ENCODE measurements at regions of chr6 and their contacts with region 1.

Region 1: GRCh38 chr6:150079604-150080003 is 10.7 kb upstream of the ULBP3 start:
- DNase-seq: peak in 1 of 2 donors; percentile 65
- ATAC-seq: peak in 2 of 3 donors; percentile 12 to 31
- H3K4me3 ChIP-seq: no peak overlapping the region
- H3K4me3 Mint-ChIP-seq: no peak overlapping the region
- H3K27ac ChIP-seq: no peak overlapping the region
- H3K27ac Mint-ChIP-seq: no peak overlapping the region
- H3K4me1 ChIP-seq: peaks cover 3% of the 10 kb centered on the region
- H3K4me1 Mint-ChIP-seq: peaks cover 6 to 13% of the 10 kb centered on the region in 2 donors
- H3K27me3 ChIP-seq: no peaks in the 10 kb centered on the region
- H3K27me3 Mint-ChIP-seq: peaks cover 19 to 43% of the 10 kb centered on the region in 2 donors
- CTCF ChIP-seq: no peak

Region 2: GRCh38 chr6:149716181-149716973 is 363.2 kb before region 1 on chr6:
- intact Hi-C with region 1: no loop called
- DNase-seq: peak in 1 of 2 donors; percentile 25
- ATAC-seq: no peak
- H3K4me3 ChIP-seq: peak overlapping the region; percentile 81
- H3K4me3 Mint-ChIP-seq: peak overlapping the region; percentile 96
- H3K27ac ChIP-seq: peak overlapping the region; percentile 47
- H3K27ac Mint-ChIP-seq: peak overlapping the region; percentile 94 to 97
- H3K4me1 ChIP-seq: peaks cover 11% of the 10 kb centered on the region
- H3K4me1 Mint-ChIP-seq: peaks cover 31 to 35% of the 10 kb centered on the region in 2 donors
- H3K27me3 ChIP-seq: no peaks in the 10 kb centered on the region
- H3K27me3 Mint-ChIP-seq: no peaks in the 10 kb centered on the region
- CTCF ChIP-seq: no peak

Region 3: GRCh38 chr6:150100745-150101144 is 21.1 kb after region 1 on chr6:
- intact Hi-C with region 1: no loop called
- DNase-seq: no peak
- ATAC-seq: no peak
- H3K4me3 ChIP-seq: no peak overlapping the region
- H3K4me3 Mint-ChIP-seq: no peak overlapping the region
- H3K27ac ChIP-seq: no peak overlapping the region
- H3K27ac Mint-ChIP-seq: no peak overlapping the region
- H3K4me1 ChIP-seq: no peaks in the 10 kb centered on the region
- H3K4me1 Mint-ChIP-seq: no peaks in the 10 kb centered on the region
- H3K27me3 ChIP-seq: no peaks in the 10 kb centered on the region
- H3K27me3 Mint-ChIP-seq: peaks cover 3 to 18% of the 10 kb centered on the region in 2 donors
- CTCF ChIP-seq: no peak

Region 4: DNA sequence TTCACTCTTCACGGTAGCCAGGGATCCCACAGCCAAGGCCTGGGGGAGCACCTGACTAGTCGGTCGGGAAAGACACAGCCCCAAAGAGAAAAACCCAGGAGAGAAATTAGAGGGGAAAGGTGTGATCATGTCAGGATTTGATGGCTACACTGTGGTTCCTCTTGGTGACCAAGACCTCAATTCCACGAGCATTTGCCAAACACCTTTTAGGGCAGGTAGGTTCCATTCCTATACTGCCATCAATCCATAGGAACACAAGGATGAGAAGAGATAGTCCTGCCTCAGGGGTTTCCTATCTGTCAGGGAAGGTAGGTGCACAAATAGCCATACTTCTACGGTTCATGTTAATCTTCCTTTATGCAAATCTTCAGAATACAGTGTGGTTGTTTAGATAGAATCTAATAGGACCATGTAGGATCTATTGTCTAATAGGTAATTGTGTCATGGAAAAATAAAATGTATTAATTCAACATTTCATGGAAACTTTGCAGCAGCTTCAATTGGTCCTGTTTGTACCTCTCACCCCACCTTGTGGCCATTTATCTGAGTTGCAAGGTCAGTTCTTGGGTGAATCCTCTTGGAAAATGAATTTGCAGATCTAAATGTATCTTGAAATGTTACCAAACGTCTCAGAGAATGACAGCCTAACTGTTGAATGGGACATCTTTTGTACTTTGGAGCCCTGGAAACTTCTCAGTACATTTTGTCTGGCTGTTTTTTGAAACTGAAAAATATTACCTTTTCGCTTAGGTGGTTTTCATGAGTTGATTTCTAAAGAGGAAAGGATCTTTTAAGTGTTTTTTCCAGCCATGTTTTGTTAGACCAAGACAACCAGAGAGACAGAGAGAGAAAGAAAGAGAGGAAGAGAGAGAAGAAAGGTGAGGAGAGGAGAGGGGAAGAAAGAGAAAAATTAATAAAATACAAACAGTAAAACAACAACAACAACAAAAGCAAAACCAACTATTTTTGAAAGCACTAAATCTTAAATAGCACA is 255.5 kb after region 1 on chr6:
- intact Hi-C with region 1: loop called (anchors 1 kb)
- DNase-seq: peak in 1 of 2 donors; percentile 68
- ATAC-seq: peak in 1 of 3 donors; percentile 36
- H3K4me3 ChIP-seq: no peak overlapping the region
- H3K4me3 Mint-ChIP-seq: no peak overlapping the region
- H3K27ac ChIP-seq: no peak overlapping the region
- H3K27ac Mint-ChIP-seq: no peak overlapping the region
- H3K4me1 ChIP-seq: no peaks in the 10 kb centered on the region
- H3K4me1 Mint-ChIP-seq: no peaks in the 10 kb centered on the region
- H3K27me3 ChIP-seq: no peaks in the 10 kb centered on the region
- H3K27me3 Mint-ChIP-seq: peaks cover 6 to 14% of the 10 kb centered on the region in 2 donors
- CTCF ChIP-seq: peak; percentile 65

Region 5: GRCh38 chr6:150395398-150396009 is 315.9 kb after region 1 on chr6:
- intact Hi-C with region 1: loop called (anchors 2 kb)
- DNase-seq: peak in 1 of 2 donors; percentile 65
- ATAC-seq: peak in 2 of 3 donors; percentile 51 to 75
- H3K4me3 ChIP-seq: no peak overlapping the region
- H3K4me3 Mint-ChIP-seq: no peak overlapping the region
- H3K27ac ChIP-seq: no peak overlapping the region
- H3K27ac Mint-ChIP-seq: no peak overlapping the region
- H3K4me1 ChIP-seq: no peaks in the 10 kb centered on the region
- H3K4me1 Mint-ChIP-seq: no peaks in the 10 kb centered on the region
- H3K27me3 ChIP-seq: no peaks in the 10 kb centered on the region
- H3K27me3 Mint-ChIP-seq: peaks cover 9 to 20% of the 10 kb centered on the region in 2 donors
- CTCF ChIP-seq: peak; percentile 37

Region 6: DNA sequence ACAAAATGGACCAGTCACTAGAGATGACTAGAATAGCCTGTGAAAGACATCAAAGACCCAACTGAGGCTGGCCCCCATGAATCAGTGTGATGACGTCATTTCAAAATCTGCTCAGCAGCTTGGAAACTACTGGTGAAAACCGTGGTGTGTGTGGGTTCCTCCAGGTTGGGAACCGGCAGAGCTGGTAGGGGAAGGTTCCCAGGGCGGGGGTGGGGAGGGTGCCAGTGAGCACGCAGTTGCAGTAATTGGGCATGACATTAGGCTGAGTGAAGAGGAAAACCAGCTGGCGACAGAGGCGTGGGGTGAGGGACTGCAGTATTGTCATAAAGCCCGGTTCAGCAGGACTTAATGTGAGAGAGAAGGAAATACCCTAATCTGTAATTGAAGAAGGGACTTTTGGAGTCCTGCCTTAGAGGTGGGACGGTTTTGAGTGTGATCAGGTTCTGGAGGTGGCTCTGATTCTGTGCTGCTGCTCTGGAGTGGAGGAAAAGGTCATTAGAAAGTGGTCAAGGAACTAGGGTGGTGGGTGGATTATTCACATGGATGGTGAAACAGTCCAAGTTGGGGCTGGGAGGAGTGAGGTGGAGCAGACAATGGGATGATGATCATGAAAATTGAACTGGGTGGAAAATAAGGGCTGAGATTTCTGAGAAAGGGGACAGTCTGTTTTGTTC is 733.9 kb after region 1 on chr6:
- intact Hi-C with region 1: loop called (anchors 1 kb)
- DNase-seq: peak in 1 of 2 donors; percentile 44
- ATAC-seq: no peak
- H3K4me3 ChIP-seq: no peak overlapping the region
- H3K4me3 Mint-ChIP-seq: no peak overlapping the region
- H3K27ac ChIP-seq: peak overlapping the region; percentile 6
- H3K27ac Mint-ChIP-seq: no peak overlapping the region
- H3K4me1 ChIP-seq: no peaks in the 10 kb centered on the region
- H3K4me1 Mint-ChIP-seq: no peaks in the 10 kb centered on the region
- H3K27me3 ChIP-seq: no peaks in the 10 kb centered on the region
- H3K27me3 Mint-ChIP-seq: peaks cover 13 to 15% of the 10 kb centered on the region in 2 donors
- CTCF ChIP-seq: no peak